Breast epithelium (tissue), 4 donors: ENCODE measurements at regions of chr20 and their contacts with region 1.

Region 1: DNA sequence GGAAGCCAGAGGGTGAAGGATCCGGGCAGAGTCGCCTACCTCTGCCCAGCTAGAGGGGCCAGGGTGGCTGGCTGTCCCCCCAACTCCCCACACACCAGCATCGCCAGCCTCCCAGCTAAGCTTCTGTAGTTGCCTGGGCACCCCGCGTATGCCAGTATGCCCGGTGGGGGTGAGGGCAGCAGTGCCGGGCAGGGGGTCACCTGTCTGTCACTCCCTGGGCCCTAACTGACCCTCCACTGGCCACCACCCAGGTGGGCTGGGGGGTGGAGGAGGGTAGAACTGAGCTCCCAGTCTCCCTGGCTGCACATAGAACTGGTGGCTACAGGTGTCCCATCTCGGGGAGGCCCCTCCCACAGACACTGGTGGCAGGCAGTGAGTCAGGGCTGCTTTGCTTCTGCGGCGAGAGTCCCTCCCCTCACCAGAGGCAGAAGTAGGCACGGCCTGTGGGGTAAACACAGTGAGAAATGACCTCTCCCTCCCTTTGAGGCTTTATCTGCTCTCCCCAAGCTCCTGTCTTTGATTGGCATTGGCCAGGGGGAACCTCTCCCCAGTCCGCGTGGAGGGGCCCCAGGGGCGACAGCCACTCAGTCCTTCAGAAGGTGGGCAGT is 2.4 kb downstream of the NTSR1 start:
- DNase-seq: no peak
- H3K4me3 ChIP-seq: no peak overlapping the region
- H3K27ac ChIP-seq: no peak overlapping the region
- H3K4me1 ChIP-seq: no peaks in the 10 kb centered on the region
- H3K27me3 ChIP-seq: peaks cover 4 to 59% of the 10 kb centered on the region in 2 donors
- CTCF ChIP-seq: no peak
- POLR2A ChIP-seq: no peak

Region 2: DNA sequence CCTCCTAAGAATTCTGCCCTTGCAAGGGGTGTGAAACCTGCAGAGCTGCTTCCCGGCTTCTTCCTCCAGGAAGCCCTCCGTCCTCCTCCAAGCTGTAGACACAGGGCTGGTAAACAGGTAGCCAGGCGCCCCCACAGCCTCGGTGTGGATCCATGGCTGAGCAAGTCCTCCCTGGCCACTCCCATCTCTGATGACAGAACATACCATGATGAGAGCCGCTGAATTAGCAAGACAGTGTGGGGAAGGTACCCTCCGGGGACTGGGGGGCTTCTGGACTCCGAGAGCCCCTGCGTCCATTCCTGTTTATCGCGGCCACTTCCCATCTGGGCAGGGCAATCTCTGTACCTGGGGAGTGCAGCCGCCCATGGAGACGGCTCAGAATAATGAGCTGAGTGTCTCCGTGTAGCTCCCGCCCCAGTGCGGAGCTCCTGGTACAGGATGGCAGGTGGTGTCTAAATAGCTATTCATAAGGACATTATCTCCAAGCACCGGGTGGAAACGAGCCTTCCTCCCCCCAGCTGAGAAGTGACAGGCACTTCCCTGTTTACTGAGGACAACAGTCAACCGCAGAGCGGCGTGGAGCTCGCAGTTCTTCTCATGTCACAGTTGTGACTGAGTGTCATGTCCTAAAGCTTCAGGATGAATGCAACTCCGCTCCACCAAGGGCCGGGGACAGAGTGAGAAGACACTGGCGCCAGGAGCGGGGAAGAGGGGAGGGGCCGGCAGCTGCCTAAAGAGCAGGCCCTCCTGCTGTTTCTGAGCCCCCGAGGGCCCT is 25.0 kb before region 1 on chr20:
- intact Hi-C with region 1: loop called (anchors 1 kb)
- DNase-seq: no peak
- H3K4me3 ChIP-seq: no peak overlapping the region
- H3K27ac ChIP-seq: no peak overlapping the region
- H3K4me1 ChIP-seq: no peaks in the 10 kb centered on the region
- H3K27me3 ChIP-seq: peaks cover 4 to 33% of the 10 kb centered on the region in 2 donors
- CTCF ChIP-seq: no peak
- POLR2A ChIP-seq: no peak